ENCODE measurements at regions of chr19 and their contacts with region 1.

Region 1: GRCh38 chr19:11380653-11381534 is 3.2 kb downstream of the EPOR start:
- DNase-seq: peak; percentile 99
- ATAC-seq: peak; percentile 68
- H3K4me3 ChIP-seq: peak overlapping the region; percentile 81
- H3K27ac ChIP-seq: peak overlapping the region; percentile 89
- H3K4me1 ChIP-seq: peaks cover 64% of the 10 kb centered on the region
- H3K27me3 ChIP-seq: no peaks in the 10 kb centered on the region
- CTCF ChIP-seq: peak; percentile 87

Region 2: DNA sequence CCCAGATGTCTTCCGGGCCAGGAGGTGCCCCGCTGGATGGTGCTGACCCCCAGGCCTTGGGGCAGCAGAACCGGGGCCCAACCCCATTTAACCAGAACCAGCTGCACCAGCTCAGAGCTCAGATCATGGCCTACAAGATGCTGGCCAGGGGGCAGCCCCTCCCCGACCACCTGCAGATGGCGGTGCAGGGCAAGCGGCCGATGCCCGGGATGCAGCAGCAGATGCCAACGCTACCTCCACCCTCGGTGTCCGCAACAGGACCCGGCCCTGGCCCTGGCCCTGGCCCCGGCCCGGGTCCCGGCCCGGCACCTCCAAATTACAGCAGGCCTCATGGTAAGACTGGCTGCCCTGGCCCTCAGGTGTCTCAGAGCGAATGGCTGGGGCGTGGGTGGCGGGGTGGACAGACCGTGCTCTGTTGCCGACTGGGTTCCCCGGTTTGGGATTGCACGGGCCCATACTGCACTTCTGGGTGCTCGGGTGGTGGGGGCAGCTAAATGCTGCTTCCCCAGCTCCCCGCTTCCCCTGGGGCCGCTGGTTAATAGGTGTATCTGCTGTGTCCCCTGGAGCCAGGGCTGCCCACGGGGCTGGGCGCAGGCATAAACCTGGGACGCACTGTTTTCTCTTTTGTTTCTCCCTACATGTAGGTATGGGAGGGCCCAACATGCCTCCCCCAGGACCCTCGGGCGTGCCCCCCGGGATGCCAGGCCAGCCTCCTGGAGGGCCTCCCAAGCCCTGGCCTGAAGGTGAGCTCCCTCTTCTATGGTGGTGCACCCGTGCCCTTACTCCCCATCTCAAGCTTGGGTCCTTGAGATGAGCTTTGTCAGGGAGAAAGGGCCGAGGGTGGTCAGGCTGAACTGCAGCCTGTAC is 394.4 kb before region 1 on chr19:
- CTCF ChIA-PET with region 1: no interaction called
- POLR2A ChIA-PET with region 1: no interaction called
- intact Hi-C with region 1: no loop called
- DNase-seq: no peak
- ATAC-seq: no peak
- H3K4me3 ChIP-seq: no peak overlapping the region
- H3K27ac ChIP-seq: no peak overlapping the region
- H3K4me1 ChIP-seq: no peaks in the 10 kb centered on the region
- H3K27me3 ChIP-seq: no peaks in the 10 kb centered on the region
- CTCF ChIP-seq: no peak

Region 3: GRCh38 chr19:11168568-11168967 is 212.3 kb before region 1 on chr19:
- CTCF ChIA-PET with region 1: no interaction called
- POLR2A ChIA-PET with region 1: interaction called, 28 read pairs
- intact Hi-C with region 1: no loop called
- DNase-seq: peak; percentile 99
- ATAC-seq: peak; percentile 97
- H3K4me3 ChIP-seq: no peak overlapping the region
- H3K27ac ChIP-seq: peak overlapping the region; percentile 76
- H3K4me1 ChIP-seq: peaks cover 18% of the 10 kb centered on the region
- H3K27me3 ChIP-seq: no peaks in the 10 kb centered on the region
- CTCF ChIP-seq: no peak

Region 4: GRCh38 chr19:11261941-11262839 is 118.7 kb before region 1 on chr19 and contains the start of gene DOCK6:
- CTCF ChIA-PET with region 1: no interaction called
- POLR2A ChIA-PET with region 1: no interaction called
- intact Hi-C with region 1: no loop called
- DNase-seq: peak; percentile 32
- ATAC-seq: peak; percentile 35
- H3K4me3 ChIP-seq: peak within 1 kb of the TSS; percentile 95
- H3K27ac ChIP-seq: no peak within 1 kb of the TSS
- H3K4me1 ChIP-seq: peaks cover 32% of the 10 kb centered on the region
- H3K27me3 ChIP-seq: no peaks in the 10 kb centered on the region
- CTCF ChIP-seq: peak; percentile 53
- total RNA-seq, gene DOCK6: 28.0 and 29.4 TPM in 2 replicates

Region 5: GRCh38 chr19:11299946-11300810 is 80.7 kb before region 1 on chr19:
- CTCF ChIA-PET with region 1: no interaction called
- POLR2A ChIA-PET with region 1: no interaction called
- intact Hi-C with region 1: no loop called
- DNase-seq: no peak
- ATAC-seq: no peak
- H3K4me3 ChIP-seq: no peak overlapping the region
- H3K27ac ChIP-seq: no peak overlapping the region
- H3K4me1 ChIP-seq: no peaks in the 10 kb centered on the region
- H3K27me3 ChIP-seq: no peaks in the 10 kb centered on the region
- CTCF ChIP-seq: no peak

Region 6: DNA sequence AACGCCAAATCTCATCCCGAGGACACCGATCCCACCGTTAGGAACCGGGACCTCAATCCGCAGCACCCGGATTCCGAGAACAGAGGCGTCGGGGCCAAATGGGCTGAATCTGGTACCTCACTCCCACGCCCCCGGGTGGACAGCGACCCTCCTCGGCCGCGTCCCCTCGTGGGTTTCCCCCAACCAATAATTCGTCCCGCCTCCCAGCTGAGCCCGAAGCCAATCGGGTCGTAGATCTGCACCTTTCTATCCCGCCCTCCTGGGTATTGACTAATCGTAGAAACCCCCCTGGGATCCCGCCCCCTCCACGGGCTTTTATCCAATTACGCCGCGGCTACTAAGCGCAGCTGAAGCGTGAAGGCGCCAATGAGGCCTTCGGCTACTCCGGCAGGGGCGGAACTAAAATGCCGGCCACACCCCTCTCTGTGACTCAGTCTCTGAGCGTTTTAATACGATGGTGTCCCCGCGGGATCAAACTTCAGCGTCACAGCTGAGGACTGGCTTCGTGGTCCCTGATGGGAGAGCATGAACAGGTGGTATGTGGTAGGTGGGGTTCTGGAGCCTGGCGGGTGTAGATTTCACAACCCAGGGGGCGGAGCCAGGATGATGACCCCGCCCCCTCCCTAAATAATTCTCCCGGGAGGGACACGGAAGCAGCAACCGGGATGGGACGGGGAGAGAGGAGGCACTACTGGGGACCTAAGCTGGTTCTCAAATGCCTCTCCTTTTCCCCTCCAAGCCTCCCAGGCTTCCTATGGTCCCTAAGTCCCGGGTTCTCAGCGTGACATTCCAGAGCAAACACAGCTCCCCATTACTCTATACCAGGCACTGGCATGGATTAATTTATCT is 34.6 kb before region 1 on chr19 and contains the starts of genes CCDC159 and TMEM205:
- CTCF ChIA-PET with region 1: interaction called, 7 read pairs
- POLR2A ChIA-PET with region 1: interaction called, 9 read pairs
- intact Hi-C with region 1: loop called (anchors 1 kb)
- DNase-seq: peak; percentile 100
- ATAC-seq: peak; percentile 82
- H3K4me3 ChIP-seq: peak within 1 kb of the TSS; percentile 80
- H3K27ac ChIP-seq: peak within 1 kb of the TSS; percentile 72
- H3K4me1 ChIP-seq: peaks cover 36% of the 10 kb centered on the region
- H3K27me3 ChIP-seq: no peaks in the 10 kb centered on the region
- CTCF ChIP-seq: 0 out of 2 replicates have a peak, but pooled peaks have one; percentile 24
- total RNA-seq, gene CCDC159: 10.3 and 14.5 TPM in 2 replicates
- total RNA-seq, gene TMEM205: 202 and 224 TPM in 2 replicates

Region 7: GRCh38 chr19:11435058-11435832 is 54.4 kb after region 1 on chr19 and contains the starts of genes ODAD3 and PRKCSH:
- CTCF ChIA-PET with region 1: interaction called, 29 read pairs
- POLR2A ChIA-PET with region 1: interaction called, 3 read pairs
- intact Hi-C with region 1: loop called (anchors 1 kb)
- DNase-seq: peak; percentile 100
- ATAC-seq: peak; percentile 93
- H3K4me3 ChIP-seq: peak within 1 kb of the TSS; percentile 87
- H3K27ac ChIP-seq: peak within 1 kb of the TSS; percentile 23
- H3K4me1 ChIP-seq: peaks cover 13% of the 10 kb centered on the region
- H3K27me3 ChIP-seq: no peaks in the 10 kb centered on the region
- CTCF ChIP-seq: peak; percentile 88
- total RNA-seq, gene ODAD3: 0.52 and 3.9 TPM in 2 replicates
- total RNA-seq, gene PRKCSH: 222 and 266 TPM in 2 replicates

Region 8: DNA sequence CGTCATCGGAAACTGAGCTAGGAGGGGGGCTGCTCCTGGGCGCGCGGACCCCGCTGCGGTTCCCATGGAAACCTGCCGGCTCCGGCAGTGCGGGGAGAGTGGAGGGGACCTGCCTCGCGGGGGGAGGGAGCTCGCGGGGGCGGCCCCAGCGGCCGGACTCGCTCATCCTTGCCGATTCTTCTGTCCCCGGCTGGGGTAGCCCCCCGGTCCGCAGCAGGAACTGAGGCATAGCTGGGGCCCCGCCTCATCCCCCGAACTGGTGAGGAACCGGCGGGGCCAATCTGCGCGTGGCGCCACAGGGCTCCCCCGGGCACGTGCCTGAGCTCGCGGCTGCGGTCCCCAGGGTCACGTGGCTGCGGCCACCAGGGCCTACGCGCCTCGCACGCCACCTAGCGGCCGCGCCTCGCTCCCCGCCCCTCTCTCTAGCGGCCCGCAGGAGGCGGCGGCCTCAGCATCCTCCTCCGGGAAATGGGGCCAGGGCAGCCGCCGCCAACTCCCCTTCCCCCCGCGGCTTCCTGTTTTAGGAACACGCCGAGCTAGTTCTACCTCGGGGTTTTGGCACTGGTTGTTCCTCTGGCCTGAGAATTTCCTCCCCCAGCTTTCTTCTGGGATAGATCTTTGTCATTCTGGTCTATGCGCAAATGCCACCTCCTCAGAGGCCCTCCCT is 101.6 kb after region 1 on chr19:
- CTCF ChIA-PET with region 1: interaction called, 11 read pairs
- POLR2A ChIA-PET with region 1: no interaction called
- intact Hi-C with region 1: loop called (anchors 2 kb)
- DNase-seq: peak; percentile 88
- ATAC-seq: peak; percentile 81
- H3K4me3 ChIP-seq: peak overlapping the region; percentile 59
- H3K27ac ChIP-seq: no peak overlapping the region
- H3K4me1 ChIP-seq: peaks cover 7% of the 10 kb centered on the region; the same call in 1 of the 2 replicates
- H3K27me3 ChIP-seq: peaks cover 14% of the 10 kb centered on the region; the same call in 1 of the 2 replicates
- CTCF ChIP-seq: peak; percentile 96